Naive thymus-derived CD4-positive, alpha-beta T cell (primary cell): ENCODE measurements at regions of chr7 and their contacts with region 1.

Region 1: DNA sequence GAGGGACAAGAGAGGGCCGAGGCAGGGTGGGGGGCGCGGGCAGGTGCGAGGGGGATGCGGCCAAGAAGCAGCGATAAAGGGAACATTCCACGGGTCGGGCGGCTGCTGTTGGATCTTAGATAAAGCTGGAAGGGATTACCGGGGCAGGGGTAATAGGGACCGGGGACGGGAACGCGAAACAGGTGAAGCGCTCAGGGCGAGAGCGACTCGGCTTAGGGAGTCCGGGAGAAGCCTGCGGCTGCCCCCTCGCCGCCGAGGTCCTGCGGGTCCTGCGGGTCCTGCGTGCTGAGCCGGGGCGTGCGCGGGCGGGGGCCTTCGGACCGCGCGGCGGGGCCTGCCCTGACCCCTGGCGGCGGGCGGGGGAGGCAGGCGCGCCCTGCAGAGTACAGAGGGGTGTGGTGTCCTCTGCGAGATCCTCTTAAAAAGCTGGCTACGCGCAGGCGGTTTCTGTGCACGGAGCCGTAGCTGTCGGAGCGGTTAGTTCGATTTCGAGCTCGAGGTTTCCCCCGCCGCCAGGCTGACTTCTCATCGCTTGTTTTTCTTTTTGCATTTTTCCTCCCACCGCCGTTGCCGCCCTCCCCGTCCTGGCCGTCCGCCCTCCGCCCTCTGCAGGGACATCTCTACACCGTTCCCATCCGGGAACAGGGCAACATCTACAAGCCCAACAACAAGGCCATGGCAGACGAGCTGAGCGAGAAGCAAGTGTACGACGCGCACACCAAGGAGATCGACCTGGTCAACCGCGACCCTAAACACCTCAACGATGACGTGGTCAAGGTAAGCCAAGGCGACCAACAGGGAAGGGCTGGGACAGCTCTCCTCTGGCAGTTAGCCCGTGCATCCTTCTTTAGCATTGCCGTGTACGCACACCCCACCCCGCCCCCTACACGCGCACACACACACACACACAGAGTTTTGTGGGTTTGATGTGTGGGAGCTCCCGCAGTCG is 1.4 kb downstream of the CAV1 start:
- DNase-seq: peak; percentile 21 to 73 (median 52)
- ATAC-seq: peak; percentile 93
- H3K4me3 ChIP-seq: peak overlapping the region; percentile 48
- H3K4me3 Mint-ChIP-seq: peak overlapping the region; percentile 76 to 89 (median 83)
- H3K27ac ChIP-seq: no peak overlapping the region
- H3K27ac Mint-ChIP-seq: peak overlapping the region in 1 of 9 donors; percentile 32
- H3K4me1 ChIP-seq: peaks cover 9 to 14% of the 10 kb centered on the region in 2 donors
- H3K4me1 Mint-ChIP-seq: peaks cover 8 to 22% (median 21%) of the 10 kb centered on the region in 7 donors
- H3K27me3 ChIP-seq: peaks cover 19 to 22% of the 10 kb centered on the region in 2 donors
- H3K27me3 Mint-ChIP-seq: peaks cover 70 to 85% (median 77%) of the 10 kb centered on the region in 5 donors

Region 2: DNA sequence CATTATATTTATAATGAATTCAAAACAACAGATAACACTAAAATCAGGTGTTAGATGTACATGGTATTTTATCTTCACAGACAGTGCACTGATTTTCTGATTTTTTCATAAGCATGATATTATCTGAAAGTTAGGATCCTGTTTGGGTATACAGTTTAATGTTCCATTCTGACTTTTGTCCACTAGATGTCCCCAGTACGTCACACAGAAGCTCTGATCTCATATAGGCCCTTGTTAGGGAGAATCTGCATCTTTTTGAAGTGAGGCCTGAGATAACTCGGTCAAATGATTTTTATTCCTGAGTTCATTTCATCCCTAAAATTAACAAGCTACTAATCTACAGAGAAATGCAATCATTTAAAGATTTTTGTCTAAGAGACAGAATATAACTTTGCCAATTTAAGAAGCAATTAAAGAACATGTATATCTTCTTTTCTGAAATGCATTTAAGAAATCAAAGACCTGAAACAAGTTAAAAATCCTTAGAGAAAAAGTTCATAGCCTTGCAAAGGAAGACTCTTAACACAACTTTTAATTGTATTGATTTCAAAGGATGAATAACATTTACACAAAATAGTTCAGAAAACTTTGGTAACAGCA is 387.9 kb before region 1 on chr7:
- CTCF ChIA-PET with region 1: interaction called, 3 read pairs
- POLR2A ChIA-PET with region 1: no interaction called
- intact Hi-C with region 1: loop called in 1 of 2 experiments (anchors 1 kb)
- DNase-seq: peak in 5 of 9 donors; percentile 22 to 42 (median 27)
- ATAC-seq: peak; percentile 89
- H3K4me3 ChIP-seq: no peak overlapping the region
- H3K4me3 Mint-ChIP-seq: no peak overlapping the region
- H3K27ac ChIP-seq: no peak overlapping the region
- H3K27ac Mint-ChIP-seq: no peak overlapping the region
- H3K4me1 ChIP-seq: no peaks in the 10 kb centered on the region
- H3K4me1 Mint-ChIP-seq: peaks cover 0 to 18% (median 8%) of the 10 kb centered on the region in 7 donors
- H3K27me3 ChIP-seq: peaks cover 0 to 2% of the 10 kb centered on the region in 2 donors
- H3K27me3 Mint-ChIP-seq: peaks cover 0 to 22% (median 10%) of the 10 kb centered on the region in 5 donors

Region 3: DNA sequence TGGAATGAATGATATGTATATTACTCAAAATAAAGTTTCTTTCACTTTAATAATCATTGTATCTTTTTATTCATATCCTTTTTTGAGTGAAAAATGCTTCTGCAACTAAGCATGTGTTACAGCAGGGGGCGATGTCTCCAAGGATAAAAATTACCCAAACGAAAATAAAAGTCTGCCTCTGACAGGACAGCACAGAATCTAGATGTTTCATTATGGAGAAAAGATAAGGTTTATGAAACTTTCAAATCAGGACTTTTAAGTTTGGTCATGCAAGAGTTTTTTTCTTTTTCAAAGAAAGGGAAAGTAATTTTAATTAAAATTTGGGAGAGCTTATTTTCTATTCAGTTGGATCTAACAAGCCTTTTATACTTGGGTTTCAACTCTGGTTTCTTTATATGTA is 267.5 kb before region 1 on chr7:
- CTCF ChIA-PET with region 1: interaction called, 11 read pairs
- POLR2A ChIA-PET with region 1: no interaction called
- intact Hi-C with region 1: loop called (anchors 1 to 2 kb)
- DNase-seq: peak in 7 of 9 donors; percentile 14 to 45 (median 36)
- ATAC-seq: peak; percentile 82
- H3K4me3 ChIP-seq: no peak overlapping the region
- H3K4me3 Mint-ChIP-seq: no peak overlapping the region
- H3K27ac ChIP-seq: no peak overlapping the region
- H3K27ac Mint-ChIP-seq: peak overlapping the region in 7 of 9 donors; percentile 33 to 79 (median 49)
- H3K4me1 ChIP-seq: no peaks in the 10 kb centered on the region
- H3K4me1 Mint-ChIP-seq: peaks cover 10 to 26% (median 15%) of the 10 kb centered on the region in 7 donors
- H3K27me3 ChIP-seq: no peaks in the 10 kb centered on the region
- H3K27me3 Mint-ChIP-seq: peaks cover 0 to 5% (median 0%) of the 10 kb centered on the region in 5 donors

Region 4: GRCh38 chr7:116367221-116367813 is 158.9 kb before region 1 on chr7:
- CTCF ChIA-PET with region 1: no interaction called
- POLR2A ChIA-PET with region 1: no interaction called
- intact Hi-C with region 1: no loop called
- DNase-seq: no peak
- ATAC-seq: no peak
- H3K4me3 ChIP-seq: no peak overlapping the region
- H3K4me3 Mint-ChIP-seq: no peak overlapping the region
- H3K27ac ChIP-seq: no peak overlapping the region
- H3K27ac Mint-ChIP-seq: no peak overlapping the region
- H3K4me1 ChIP-seq: no peaks in the 10 kb centered on the region
- H3K4me1 Mint-ChIP-seq: no peaks in the 10 kb centered on the region
- H3K27me3 ChIP-seq: no peaks in the 10 kb centered on the region
- H3K27me3 Mint-ChIP-seq: peaks cover under 1 to 33% (median 13%) of the 10 kb centered on the region in 5 donors

Region 5: DNA sequence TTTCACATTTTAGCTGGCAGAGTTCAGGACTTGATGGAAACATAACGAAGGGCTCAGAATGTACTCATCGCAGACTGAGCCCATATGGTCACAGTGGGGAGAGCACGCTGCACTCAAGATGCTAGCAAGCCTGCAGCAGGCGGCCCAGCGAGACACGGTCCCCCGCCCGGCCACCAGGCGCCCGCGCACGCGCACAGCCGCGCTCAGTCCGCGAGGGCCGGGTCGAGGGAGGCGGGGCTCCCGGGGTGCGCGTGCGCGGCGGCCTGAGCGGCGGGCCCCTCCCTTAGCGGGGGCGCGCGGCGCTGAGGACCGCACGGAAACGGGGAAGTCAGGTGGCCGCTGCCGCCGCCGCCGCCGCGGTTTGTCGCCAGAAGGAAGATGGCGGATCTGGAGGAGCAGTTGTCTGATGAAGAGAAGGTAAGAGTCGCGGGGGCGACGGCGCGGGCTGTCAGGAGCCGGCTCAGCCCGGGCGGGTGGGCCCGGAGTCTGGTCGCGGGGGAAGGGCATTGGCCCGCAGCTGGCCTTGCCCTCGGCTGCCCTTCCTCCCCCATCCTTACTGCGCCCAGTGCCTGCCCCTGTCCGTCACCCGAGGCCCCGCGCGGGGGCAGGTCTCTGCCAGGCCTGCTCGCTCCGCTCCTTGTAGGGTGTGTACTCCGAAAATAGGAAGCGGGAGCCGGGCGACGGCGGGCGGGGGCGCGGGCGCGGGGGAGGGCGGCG is 336.2 kb after region 1 on chr7 and contains the start of gene CAPZA2:
- CTCF ChIA-PET with region 1: no interaction called
- POLR2A ChIA-PET with region 1: no interaction called
- intact Hi-C with region 1: loop called in 1 of 2 experiments (anchors 1 kb)
- DNase-seq: peak; percentile 89 to 99 (median 96)
- ATAC-seq: peak; percentile 96
- H3K4me3 ChIP-seq: peak within 1 kb of the TSS; percentile 73
- H3K4me3 Mint-ChIP-seq: peak within 1 kb of the TSS; percentile 94 to 99 (median 97)
- H3K27ac ChIP-seq: peak within 1 kb of the TSS; percentile 91
- H3K27ac Mint-ChIP-seq: peak within 1 kb of the TSS; percentile 91 to 99 (median 96)
- H3K4me1 ChIP-seq: peaks cover 11 to 28% of the 10 kb centered on the region in 2 donors
- H3K4me1 Mint-ChIP-seq: peaks cover 29 to 49% (median 46%) of the 10 kb centered on the region in 7 donors
- H3K27me3 ChIP-seq: no peaks in the 10 kb centered on the region
- H3K27me3 Mint-ChIP-seq: peaks cover 4 to 26% (median 8%) of the 10 kb centered on the region in 5 donors
- total RNA-seq, gene CAPZA2: 86.2 to 129 (median 111) TPM